ENCODE measurements at regions of chr1 and their contacts with region 1.

Region 1: GRCh38 chr1:179365320-179366092 is at the start of gene AXDND1:
- DNase-seq: peak; percentile 83
- ATAC-seq: peak; percentile 91
- H3K4me3 Mint-ChIP-seq: peak within 1 kb of the TSS; percentile 98
- H3K27ac Mint-ChIP-seq: peak within 1 kb of the TSS; percentile 100
- H3K4me1 Mint-ChIP-seq: peaks cover 11% of the 10 kb centered on the region
- H3K27me3 Mint-ChIP-seq: no peaks in the 10 kb centered on the region
- CTCF ChIP-seq: no peak
- total RNA-seq, gene AXDND1: 0.61 and 0.75 TPM in 2 replicates

Region 2: GRCh38 chr1:178575611-178576331 is 789.7 kb before region 1 on chr1:
- CTCF ChIA-PET with region 1: no interaction called
- POLR2A ChIA-PET with region 1: no interaction called
- intact Hi-C with region 1: loop called (anchors 5 kb)
- DNase-seq: no peak
- ATAC-seq: peak; percentile 36
- H3K4me3 Mint-ChIP-seq: peak overlapping the region; percentile 65
- H3K27ac Mint-ChIP-seq: peak overlapping the region; percentile 98
- H3K4me1 Mint-ChIP-seq: peaks cover 83% of the 10 kb centered on the region
- H3K27me3 Mint-ChIP-seq: no peaks in the 10 kb centered on the region
- CTCF ChIP-seq: no peak

Region 3: GRCh38 chr1:179025125-179025974 is 340.2 kb before region 1 on chr1 and contains the start of gene FAM20B:
- CTCF ChIA-PET with region 1: no interaction called
- POLR2A ChIA-PET with region 1: interaction called, 7 read pairs
- intact Hi-C with region 1: loop called (anchors 1 kb)
- DNase-seq: peak; percentile 90
- ATAC-seq: peak; percentile 84
- H3K4me3 Mint-ChIP-seq: peak within 1 kb of the TSS; percentile 90
- H3K27ac Mint-ChIP-seq: peak within 1 kb of the TSS; percentile 90
- H3K4me1 Mint-ChIP-seq: peaks cover 43% of the 10 kb centered on the region
- H3K27me3 Mint-ChIP-seq: no peaks in the 10 kb centered on the region
- CTCF ChIP-seq: no peak
- total RNA-seq, gene FAM20B: 26.3 and 27.5 TPM in 2 replicates

Region 4: DNA sequence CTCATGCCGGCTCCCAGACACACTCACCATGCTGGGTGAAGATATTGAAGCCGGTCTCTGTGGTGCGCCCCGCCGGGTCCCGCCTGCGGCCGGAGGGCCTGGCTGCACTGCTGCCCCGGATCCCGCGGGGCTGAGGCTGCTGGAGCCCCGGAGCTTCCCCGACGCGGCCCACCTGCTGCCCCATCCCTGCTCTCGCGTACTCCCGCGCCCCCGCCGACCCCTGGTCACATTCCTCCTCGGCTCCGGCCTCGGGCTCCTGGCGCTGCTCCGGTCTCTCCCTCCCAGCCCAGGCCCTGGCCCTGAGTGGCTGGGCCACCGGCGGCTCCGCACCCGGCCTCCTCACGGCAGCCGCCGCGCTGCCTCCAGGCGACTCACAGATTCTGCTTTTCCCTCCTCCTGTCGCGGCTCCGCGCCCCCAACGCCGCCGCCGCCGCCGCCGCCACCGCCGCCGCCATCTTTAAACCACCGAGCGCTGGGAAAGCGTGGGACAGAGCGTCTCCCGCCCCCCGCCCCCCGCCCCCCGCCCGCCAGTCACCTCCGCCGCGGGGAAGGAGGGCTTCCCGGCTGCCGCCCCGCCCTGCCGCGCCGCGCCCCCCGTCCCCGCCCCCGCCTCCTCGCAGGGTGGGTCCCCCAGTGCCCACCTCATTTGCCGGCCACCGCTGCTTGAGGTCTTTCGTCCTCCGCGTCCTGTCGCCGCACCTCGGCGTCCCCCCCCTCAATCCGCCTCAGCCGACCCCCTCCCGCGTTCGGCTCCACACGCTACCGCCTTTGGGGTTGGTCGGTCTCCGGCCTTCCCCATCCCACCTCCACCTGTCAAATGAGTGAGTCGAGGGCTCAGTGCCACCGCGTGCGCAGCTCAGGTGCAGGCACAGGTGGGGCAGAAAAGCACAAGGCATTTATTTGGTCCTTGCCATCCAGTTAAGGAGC is 136.0 kb before region 1 on chr1 and contains the start of gene ABL2:
- CTCF ChIA-PET with region 1: no interaction called
- POLR2A ChIA-PET with region 1: interaction called, 3 read pairs
- intact Hi-C with region 1: loop called (anchors 1 kb)
- DNase-seq: peak; percentile 49
- ATAC-seq: peak; percentile 72
- H3K4me3 Mint-ChIP-seq: peak within 1 kb of the TSS; percentile 95
- H3K27ac Mint-ChIP-seq: peak within 1 kb of the TSS; percentile 78
- H3K4me1 Mint-ChIP-seq: peaks cover 23% of the 10 kb centered on the region
- H3K27me3 Mint-ChIP-seq: no peaks in the 10 kb centered on the region
- CTCF ChIP-seq: no peak
- total RNA-seq, gene ABL2: 15.2 and 15.6 TPM in 2 replicates

Region 5: GRCh38 chr1:179305450-179305849 is 60.1 kb before region 1 on chr1:
- CTCF ChIA-PET with region 1: no interaction called
- POLR2A ChIA-PET with region 1: no interaction called
- intact Hi-C with region 1: no loop called
- DNase-seq: no peak
- ATAC-seq: no peak
- H3K4me3 Mint-ChIP-seq: no peak overlapping the region
- H3K27ac Mint-ChIP-seq: no peak overlapping the region
- H3K4me1 Mint-ChIP-seq: peaks cover 1% of the 10 kb centered on the region
- H3K27me3 Mint-ChIP-seq: no peaks in the 10 kb centered on the region
- CTCF ChIP-seq: no peak

Region 6: GRCh38 chr1:179809506-179810366 is 444.2 kb after region 1 on chr1:
- CTCF ChIA-PET with region 1: no interaction called
- POLR2A ChIA-PET with region 1: no interaction called
- intact Hi-C with region 1: loop called (anchors 1 kb)
- DNase-seq: peak; percentile 47
- ATAC-seq: peak; percentile 78
- H3K4me3 Mint-ChIP-seq: no peak overlapping the region
- H3K27ac Mint-ChIP-seq: no peak overlapping the region
- H3K4me1 Mint-ChIP-seq: peaks cover 11% of the 10 kb centered on the region
- H3K27me3 Mint-ChIP-seq: peaks cover 23% of the 10 kb centered on the region
- CTCF ChIP-seq: no peak

Region 7: DNA sequence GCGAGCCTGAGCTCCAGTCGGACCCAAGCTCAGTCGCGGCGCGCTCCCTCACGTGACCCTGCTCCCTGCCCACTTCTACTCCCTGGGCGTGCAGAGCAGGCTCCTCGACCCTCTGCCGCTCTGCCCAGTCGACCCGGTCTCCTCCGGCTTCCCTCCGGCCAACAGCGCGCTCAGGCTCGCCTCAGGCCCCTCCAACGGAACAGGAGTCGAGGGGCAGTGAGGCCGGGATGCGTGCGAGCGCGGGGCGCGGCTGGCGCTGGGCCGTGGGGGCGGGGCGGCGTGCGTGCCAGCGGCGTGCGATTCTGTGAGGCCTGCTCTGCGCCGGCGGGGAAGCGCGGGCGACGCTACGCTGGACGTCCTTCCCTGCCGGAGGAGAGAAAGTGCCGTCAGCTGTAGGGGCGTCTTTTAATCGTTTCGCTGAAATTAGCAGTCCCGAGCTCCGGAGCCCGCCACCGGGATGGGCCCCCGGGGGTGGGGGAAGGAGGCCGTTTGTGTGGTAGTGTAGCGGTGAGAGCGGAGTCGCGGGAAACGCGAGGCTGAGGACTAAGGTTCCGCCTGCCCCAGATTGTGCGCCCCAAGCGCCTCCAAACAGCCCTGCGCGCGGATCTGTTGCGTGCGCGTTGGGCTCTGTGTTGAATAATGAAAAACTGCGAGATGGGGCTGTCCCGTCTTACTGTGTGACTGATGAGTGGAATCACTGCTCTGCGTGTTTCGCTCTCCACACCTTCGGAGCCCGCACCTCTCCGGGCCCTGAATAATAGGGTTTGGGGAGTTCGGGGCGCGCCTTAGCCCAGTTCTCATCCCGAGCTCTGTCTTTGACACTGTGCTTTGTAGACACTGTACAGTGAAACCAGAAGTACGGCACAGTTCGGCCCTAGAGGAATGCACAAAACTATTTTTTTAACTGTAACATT is 1137.1 kb after region 1 on chr1 and contains the start of gene ACBD6:
- CTCF ChIA-PET with region 1: no interaction called
- POLR2A ChIA-PET with region 1: interaction called, 5 read pairs
- intact Hi-C with region 1: loop called (anchors 2 kb)
- DNase-seq: peak; percentile 82
- ATAC-seq: peak; percentile 83
- H3K4me3 Mint-ChIP-seq: peak within 1 kb of the TSS; percentile 96
- H3K27ac Mint-ChIP-seq: peak within 1 kb of the TSS; percentile 98
- H3K4me1 Mint-ChIP-seq: peaks cover 30% of the 10 kb centered on the region
- H3K27me3 Mint-ChIP-seq: no peaks in the 10 kb centered on the region
- CTCF ChIP-seq: no peak
- total RNA-seq, gene ACBD6: 55.4 and 61.5 TPM in 2 replicates

Measured in activated B cell treated with CpG ODN at 0.5 μM for 24 hours (primary cell).